Caco-2 (cell line): ENCODE measurements at regions of chr17 and their contacts with region 1.

Region 1: DNA sequence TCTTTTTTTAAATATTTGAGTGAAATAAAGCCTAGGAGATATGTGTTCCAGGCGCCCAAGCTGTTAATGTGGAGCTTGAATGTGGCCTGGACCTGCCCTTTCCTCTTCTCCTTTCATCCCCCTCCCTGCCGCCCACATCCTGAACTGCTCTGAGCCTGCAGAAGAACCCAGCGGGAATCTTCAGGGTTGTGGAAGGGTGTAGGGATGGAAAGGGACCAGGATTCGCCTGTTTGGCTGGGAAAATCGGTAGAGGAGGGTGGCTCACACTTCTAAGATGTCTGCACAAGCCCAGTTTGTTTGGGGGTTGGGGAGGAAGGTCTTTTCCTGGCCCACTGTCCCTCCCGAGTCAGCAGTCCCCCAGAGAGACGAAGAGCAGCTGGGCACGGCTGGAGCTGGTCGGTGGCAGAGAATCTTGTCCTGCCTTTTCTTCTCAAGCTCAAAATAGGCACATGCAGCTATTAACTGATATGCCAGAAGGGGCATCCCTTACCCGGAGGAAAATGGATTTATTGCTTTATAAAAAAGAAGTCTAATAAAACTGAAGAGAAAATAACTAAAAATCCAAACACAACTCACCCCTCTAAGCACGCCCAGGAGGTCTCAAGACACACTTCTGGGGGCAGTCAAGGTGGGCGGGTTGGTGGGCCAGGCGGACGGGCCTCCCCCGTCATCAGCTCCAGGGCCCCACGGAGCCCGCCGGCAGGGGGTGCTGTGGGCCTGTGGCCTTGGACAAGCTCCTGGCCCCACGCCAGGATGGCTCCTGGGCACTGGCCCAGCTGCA is 11.5 kb upstream of the PITPNA start:
- DNase-seq: peak; percentile 61 to 86
- H3K4me3 ChIP-seq: no peak overlapping the region
- H3K4me3 Mint-ChIP-seq: no peak overlapping the region
- H3K27ac Mint-ChIP-seq: no peak overlapping the region
- H3K4me1 ChIP-seq: no peaks in the 10 kb centered on the region
- H3K4me1 Mint-ChIP-seq: no peaks in the 10 kb centered on the region
- H3K27me3 ChIP-seq: no peaks in the 10 kb centered on the region
- H3K27me3 Mint-ChIP-seq: no peaks in the 10 kb centered on the region
- CTCF ChIP-seq: peak; percentile 82 to 83

Region 2: DNA sequence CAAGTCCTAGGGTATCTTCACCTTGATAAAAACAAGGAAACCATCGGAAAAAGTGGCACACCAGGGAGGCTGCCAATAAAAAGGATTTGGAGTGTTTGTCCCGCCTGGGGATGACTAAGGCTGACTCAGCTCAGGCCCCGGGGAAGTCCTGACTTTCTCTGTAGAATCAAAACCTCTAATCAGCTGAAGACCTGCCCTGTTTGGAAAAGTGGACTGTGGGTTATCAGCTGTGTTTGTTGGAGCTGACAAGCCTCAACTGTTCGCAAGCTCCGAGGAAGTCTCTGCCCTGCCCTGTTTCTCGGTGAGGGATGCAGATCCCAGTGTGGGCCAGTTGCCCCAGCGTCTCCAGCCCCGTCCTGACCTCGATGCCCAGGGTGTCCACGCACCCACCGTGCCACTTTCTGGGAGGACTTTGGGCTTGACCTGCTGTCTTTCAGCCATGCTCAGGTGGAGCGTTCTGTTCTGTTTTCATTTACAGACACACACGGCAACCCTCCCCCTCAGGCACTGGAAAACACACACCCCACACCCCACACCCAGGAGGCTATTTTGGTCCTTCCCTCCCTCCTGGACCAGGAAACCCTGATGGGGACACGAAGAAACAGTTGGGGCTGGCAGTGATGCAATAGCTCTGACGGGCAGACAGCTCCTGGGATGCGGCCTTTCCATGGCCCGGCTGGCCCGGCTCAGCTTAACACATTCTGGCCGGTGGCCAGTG is 16.1 kb after region 1 on chr17:
- CTCF ChIA-PET with region 1: interaction called, 13 read pairs
- POLR2A ChIA-PET with region 1: no interaction called
- intact Hi-C with region 1: no loop called
- DNase-seq: peak; percentile 85 to 92
- H3K4me3 ChIP-seq: no peak overlapping the region
- H3K4me3 Mint-ChIP-seq: peak overlapping the region; percentile 42
- H3K27ac Mint-ChIP-seq: peak overlapping the region; percentile 88
- H3K4me1 ChIP-seq: peaks cover 65% of the 10 kb centered on the region
- H3K4me1 Mint-ChIP-seq: peaks cover 17% of the 10 kb centered on the region
- H3K27me3 ChIP-seq: no peaks in the 10 kb centered on the region
- H3K27me3 Mint-ChIP-seq: no peaks in the 10 kb centered on the region
- CTCF ChIP-seq: no peak

Region 3: DNA sequence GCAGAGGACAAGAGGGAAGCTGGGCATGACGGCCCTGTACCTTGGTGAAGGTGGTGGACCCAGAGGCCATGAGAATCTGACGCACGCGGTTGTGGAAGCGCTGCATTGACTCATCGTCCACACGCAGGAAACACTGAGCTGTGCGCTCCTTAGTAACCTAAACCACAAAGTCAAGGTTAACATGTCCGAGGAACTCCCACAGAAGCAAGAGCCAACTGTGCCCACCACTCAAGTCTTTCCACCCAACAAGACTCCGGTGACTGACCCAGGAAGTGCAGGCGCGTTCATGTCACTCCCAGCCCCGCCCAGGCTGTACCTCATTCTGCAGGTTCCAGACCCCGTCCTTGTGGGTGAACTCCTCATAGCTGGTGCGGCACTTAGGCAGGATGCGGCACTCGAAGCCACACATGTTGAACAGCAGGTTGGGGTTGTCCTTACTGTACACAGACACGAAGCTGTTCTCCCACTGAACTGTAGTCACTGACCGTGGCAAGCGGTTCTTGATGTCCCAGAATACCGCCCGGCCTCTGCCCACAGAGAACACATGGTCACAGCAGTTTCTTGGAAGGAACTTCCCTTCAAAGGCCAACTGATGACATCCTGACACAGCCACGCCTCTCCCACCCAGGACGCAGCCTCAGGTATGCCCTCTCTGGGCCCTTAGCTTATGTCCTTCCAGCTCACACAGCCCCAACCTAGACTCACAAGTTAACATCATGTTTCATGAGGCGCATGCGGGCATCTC is 99.1 kb after region 1 on chr17:
- CTCF ChIA-PET with region 1: no interaction called
- POLR2A ChIA-PET with region 1: no interaction called
- intact Hi-C with region 1: no loop called
- DNase-seq: no peak
- H3K4me3 ChIP-seq: no peak overlapping the region
- H3K4me3 Mint-ChIP-seq: no peak overlapping the region
- H3K27ac Mint-ChIP-seq: no peak overlapping the region
- H3K4me1 ChIP-seq: no peaks in the 10 kb centered on the region
- H3K4me1 Mint-ChIP-seq: peaks cover 23% of the 10 kb centered on the region
- H3K27me3 ChIP-seq: no peaks in the 10 kb centered on the region
- H3K27me3 Mint-ChIP-seq: no peaks in the 10 kb centered on the region
- CTCF ChIP-seq: no peak

Region 4: GRCh38 chr17:1793447-1793806 is 219.3 kb after region 1 on chr17:
- CTCF ChIA-PET with region 1: no interaction called
- POLR2A ChIA-PET with region 1: no interaction called
- intact Hi-C with region 1: no loop called
- DNase-seq: no peak
- H3K4me3 ChIP-seq: no peak overlapping the region
- H3K4me3 Mint-ChIP-seq: no peak overlapping the region
- H3K27ac Mint-ChIP-seq: no peak overlapping the region
- H3K4me1 ChIP-seq: no peaks in the 10 kb centered on the region
- H3K4me1 Mint-ChIP-seq: no peaks in the 10 kb centered on the region
- H3K27me3 ChIP-seq: no peaks in the 10 kb centered on the region
- H3K27me3 Mint-ChIP-seq: no peaks in the 10 kb centered on the region
- CTCF ChIP-seq: no peak